CD4-positive, alpha-beta T cell (primary cell): ENCODE measurements at regions of chr13 and their contacts with region 1.

Region 1: DNA sequence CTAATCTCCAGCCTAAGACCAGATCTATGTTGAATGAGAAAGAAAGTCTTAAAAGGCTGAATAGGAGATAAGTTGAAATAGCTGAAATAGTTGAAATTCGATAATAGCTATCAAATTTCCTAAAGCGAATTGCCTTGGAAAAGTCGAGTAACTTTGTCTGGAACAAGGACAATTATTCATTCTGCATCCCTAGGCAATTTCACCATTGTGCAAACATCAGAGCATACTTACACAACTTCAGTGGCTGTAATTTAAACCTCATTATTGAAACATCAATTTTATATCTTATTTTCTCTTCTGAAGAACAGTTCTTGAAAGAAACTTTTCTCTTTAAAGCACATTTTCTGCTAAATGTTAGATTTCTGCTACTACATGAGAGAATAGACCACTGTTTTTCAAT is 13.6 kb downstream of the TNFSF13B start:
- DNase-seq: no peak
- ATAC-seq: no peak
- H3K4me3 ChIP-seq: no peak overlapping the region
- H3K4me3 Mint-ChIP-seq: no peak overlapping the region
- H3K27ac ChIP-seq: no peak overlapping the region
- H3K27ac Mint-ChIP-seq: no peak overlapping the region
- H3K4me1 ChIP-seq: no peaks in the 10 kb centered on the region
- H3K4me1 Mint-ChIP-seq: no peaks in the 10 kb centered on the region
- H3K27me3 ChIP-seq: no peaks in the 10 kb centered on the region
- H3K27me3 Mint-ChIP-seq: no peaks in the 10 kb centered on the region
- CTCF ChIP-seq: no peak

Region 2: GRCh38 chr13:108269601-108270328 is 13.3 kb before region 1 on chr13 and contains the start of gene TNFSF13B:
- CTCF ChIA-PET with region 1: no interaction called
- POLR2A ChIA-PET with region 1: interaction called, 10 read pairs
- intact Hi-C with region 1: no loop called
- DNase-seq: peak in 12 of 14 experiments; percentile 12 to 67 (median 35)
- ATAC-seq: peak; percentile 61
- H3K4me3 ChIP-seq: peak within 1 kb of the TSS; percentile 64
- H3K4me3 Mint-ChIP-seq: peak within 1 kb of the TSS; percentile 87
- H3K27ac ChIP-seq: peak within 1 kb of the TSS; percentile 29 to 71
- H3K27ac Mint-ChIP-seq: peak within 1 kb of the TSS; percentile 87
- H3K4me1 ChIP-seq: peaks cover 12% of the 10 kb centered on the region
- H3K4me1 Mint-ChIP-seq: peaks cover 59% of the 10 kb centered on the region
- H3K27me3 ChIP-seq: no peaks in the 10 kb centered on the region
- H3K27me3 Mint-ChIP-seq: no peaks in the 10 kb centered on the region
- CTCF ChIP-seq: no peak
- total RNA-seq, gene TNFSF13B: 1.6 to 1.8 TPM